Head of caudate nucleus (tissue), 42 donors: ENCODE measurements at regions of chr16 and their contacts with region 1.

Region 1: GRCh38 chr16:29926005-29926710 is at the start of gene KCTD13:
- DNase-seq: peak; percentile 63 to 94 (median 86)

Region 2: GRCh38 chr16:29815793-29816693 is 110.1 kb before region 1 on chr16 and contains the start of gene PAGR1:
- intact Hi-C with region 1: loop called (anchors 10 kb)
- DNase-seq: peak; percentile 92 to 99 (median 98)

Region 3: DNA sequence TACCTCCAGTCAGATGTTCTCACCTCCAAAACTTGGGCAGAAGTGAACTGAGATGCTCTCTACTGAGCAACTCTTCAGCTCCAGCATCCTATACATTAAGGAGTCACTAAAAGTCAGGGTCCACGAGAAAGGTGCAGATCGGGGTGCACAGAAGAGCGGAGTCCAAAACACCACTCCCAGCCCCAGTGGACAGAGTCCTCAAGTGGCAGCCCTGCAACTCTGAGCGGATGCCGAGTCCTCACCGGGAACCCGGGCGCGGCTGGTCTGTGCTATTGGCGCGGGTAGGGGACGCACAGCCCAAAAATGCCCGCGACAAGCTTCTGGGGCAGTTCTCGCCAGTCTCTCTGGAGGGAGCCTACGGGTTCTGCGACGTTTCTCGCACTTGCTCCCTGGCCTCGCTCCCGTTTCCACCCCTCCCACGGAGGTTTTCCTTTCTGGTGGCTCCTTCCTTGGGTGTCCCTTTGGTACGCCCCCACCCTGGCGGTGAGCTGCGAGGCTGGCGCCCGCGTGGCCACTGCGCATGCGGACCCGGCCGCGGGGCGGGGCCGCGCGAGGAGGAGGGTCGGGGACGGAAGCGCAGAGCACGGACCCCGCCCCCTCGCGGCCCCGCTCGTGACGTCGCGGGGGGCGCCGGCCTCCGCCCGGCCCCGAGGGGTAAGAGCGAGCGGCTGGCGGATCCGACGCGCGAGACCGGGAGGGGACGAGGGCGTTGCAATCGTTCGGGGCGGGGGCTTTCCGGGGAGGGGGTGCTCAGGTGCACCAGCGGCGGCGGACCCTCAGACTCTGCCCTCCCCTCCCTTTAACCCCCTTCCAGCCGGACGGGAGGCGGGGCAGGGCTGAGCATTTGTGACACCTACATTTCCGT is 35.6 kb after region 1 on chr16 and contains the start of gene TMEM219:
- intact Hi-C with region 1: loop called (anchors 5 kb)
- DNase-seq: peak; percentile 69 to 96 (median 92)

Region 4: GRCh38 chr16:29973384-29974246 is 47.5 kb after region 1 on chr16 and contains the start of gene TAOK2:
- intact Hi-C with region 1: loop called (anchors 2 kb)
- DNase-seq: peak; percentile 95 to 99 (median 98)